Common myeloid progenitor, CD34-positive (primary cell): ENCODE measurements at regions of chr18 and their contacts with region 1.

Region 1: DNA sequence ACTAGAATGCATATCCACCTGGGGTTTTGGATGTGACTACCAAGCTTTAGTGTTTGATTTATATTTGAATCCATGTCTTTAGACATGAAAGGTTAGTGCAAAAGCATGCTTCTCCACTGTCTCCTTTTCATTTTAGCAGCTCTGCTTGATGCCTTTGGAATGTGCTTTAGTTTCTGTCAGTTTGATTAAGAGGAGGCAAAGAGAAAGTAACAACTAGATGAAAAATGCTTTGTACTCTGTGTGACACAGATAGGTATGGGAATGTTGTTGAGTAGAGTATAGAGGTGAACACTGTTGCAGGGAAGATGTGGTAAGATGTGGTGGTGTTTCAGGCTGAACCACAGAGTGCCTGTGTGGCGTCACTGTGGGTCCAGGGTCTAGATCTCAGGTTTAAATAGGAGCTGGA is 19.8 kb downstream of the PIK3C3 start:
- DNase-seq: peak in 2 of 3 donors; percentile 20 to 45
- H3K4me3 ChIP-seq: peak overlapping the region in 1 of 7 experiments; percentile 44
- H3K27ac ChIP-seq: no peak overlapping the region
- H3K4me1 ChIP-seq: peaks cover 16 to 38% (median 21%) of the 10 kb centered on the region in 4 experiments
- H3K27me3 ChIP-seq: no peaks in the 10 kb centered on the region

Region 2: GRCh38 chr18:41985914-41986313 is 11.1 kb after region 1 on chr18:
- CTCF ChIA-PET with region 1: interaction called, 10 read pairs
- POLR2A ChIA-PET with region 1: no interaction called
- DNase-seq: no peak
- H3K4me3 ChIP-seq: no peak overlapping the region
- H3K27ac ChIP-seq: no peak overlapping the region
- H3K4me1 ChIP-seq: no peaks in the 10 kb centered on the region
- H3K27me3 ChIP-seq: no peaks in the 10 kb centered on the region

Region 3: GRCh38 chr18:42183746-42184145 is 208.9 kb after region 1 on chr18:
- CTCF ChIA-PET with region 1: no interaction called
- POLR2A ChIA-PET with region 1: no interaction called
- DNase-seq: no peak
- H3K4me3 ChIP-seq: no peak overlapping the region
- H3K27ac ChIP-seq: no peak overlapping the region
- H3K4me1 ChIP-seq: no peaks in the 10 kb centered on the region
- H3K27me3 ChIP-seq: no peaks in the 10 kb centered on the region